ENCODE measurements at regions of chr2 and their contacts with region 1.

Region 1: DNA sequence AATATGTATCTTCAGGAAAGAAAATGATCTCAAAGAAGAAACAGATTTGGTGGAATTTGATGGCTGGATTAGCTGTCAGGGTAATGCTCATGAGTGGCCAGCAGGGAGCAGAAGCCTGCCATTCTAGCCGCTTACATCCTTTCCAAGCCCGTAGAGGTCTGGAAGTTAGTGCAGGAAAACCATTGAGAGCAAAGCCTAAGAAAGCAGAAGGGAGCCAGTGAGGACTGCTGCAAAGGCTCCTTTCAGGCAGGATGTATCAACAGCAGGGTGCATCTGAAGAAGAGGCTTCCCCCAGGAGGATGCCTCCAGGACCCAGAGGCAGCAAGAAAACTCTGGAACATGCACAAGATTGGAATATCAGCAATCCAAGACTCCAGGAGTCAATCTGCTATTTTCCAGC is 22.9 kb upstream of the LBH start:
- DNase-seq: no peak

Region 2: DNA sequence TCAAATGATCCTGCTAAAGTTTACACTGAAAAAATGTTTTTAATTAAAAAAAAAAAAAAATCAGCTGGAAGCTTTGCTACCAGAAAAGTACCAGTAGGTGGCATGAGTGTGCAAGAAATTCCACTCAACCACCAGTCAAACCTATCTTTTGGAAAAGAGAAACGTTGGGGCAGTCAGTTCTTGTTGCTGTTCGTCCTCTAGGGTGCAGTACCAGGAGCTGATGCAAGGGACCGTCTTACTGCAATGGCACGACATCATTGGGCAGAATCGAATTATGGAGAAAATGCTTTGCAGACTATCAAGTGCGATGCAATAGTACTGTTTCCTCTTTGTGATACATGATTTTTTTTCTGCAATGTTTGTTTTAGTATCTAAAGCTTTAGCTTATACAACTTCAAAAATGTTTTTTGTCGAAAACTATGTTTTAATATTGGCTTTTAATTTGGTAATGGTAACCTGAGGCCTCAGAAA is 43.4 kb before region 1 on chr2:
- intact Hi-C with region 1: loop called (anchors 5 kb)
- DNase-seq: no peak

Region 3: GRCh38 chr2:30300456-30301221 is 92.2 kb after region 1 on chr2:
- intact Hi-C with region 1: loop called (anchors 5 kb)
- DNase-seq: peak; percentile 74

Region 4: GRCh38 chr2:30346471-30347169 is 138.2 kb after region 1 on chr2:
- intact Hi-C with region 1: loop called (anchors 5 kb)
- DNase-seq: peak; percentile 93

Region 5: DNA sequence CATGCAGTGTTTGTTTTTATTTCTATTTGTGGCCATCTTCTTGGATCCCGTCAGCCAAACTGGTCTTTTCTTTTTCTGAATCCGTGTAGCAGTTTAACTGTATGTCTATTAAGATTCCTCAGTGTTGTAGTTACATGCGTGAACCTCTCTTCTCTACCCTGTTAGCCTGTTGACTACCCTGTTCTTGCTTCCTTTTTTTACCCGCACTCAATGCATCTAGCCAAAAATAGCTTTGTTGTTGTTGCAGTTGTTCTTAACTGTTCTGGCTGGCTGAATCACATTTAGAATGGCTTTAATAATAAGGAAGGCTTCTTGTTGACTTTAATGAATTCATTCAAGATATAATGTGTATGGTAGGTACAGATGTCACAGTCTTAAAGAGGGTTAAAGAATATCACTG is 375.7 kb after region 1 on chr2:
- intact Hi-C with region 1: loop called (anchors 5 kb)
- DNase-seq: no peak

Region 6: DNA sequence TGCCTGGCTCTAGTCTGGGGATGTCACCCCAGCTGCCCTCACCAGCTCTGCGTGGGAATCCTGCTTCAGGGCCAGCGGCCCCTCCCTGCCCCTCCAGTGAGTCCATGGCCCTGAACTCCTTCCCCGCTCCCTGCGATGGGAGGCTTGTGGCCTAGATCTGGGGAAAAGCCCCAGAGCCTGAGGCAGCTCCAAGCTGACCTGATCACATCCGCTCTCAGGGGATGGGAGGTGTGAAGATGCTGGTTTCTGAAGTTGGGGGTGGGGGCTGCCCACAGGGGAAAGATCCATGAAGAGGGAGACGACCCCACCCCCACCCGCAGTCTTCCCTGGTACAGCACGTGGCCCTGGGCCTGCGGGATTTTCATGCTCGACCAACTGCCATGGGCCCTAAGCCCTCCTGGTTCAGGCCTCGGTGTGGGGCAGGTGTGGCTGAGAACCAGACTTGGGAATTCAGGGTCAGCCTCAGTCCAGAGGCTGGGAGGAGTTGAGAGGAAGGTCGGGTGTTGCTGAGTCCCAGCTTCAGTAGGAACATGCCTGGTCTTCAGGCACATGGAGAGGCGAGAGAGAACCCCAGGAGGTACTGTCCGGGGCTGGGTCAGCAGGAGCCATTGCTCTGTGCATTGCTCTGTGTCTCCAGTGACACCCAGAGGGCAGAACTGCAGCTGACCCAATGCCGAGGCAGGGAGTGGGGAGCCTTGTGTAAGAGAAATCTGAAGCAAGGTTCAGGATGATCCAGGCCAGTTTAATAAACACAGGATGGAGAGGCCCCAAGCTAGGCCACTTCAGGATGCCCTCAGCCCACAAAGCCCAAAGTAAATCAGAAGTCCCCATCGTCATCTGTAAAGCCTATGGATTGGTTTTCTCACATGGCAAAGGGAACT is 483.7 kb after region 1 on chr2:
- intact Hi-C with region 1: loop called (anchors 5 kb)
- DNase-seq: no peak

Region 7: GRCh38 chr2:31170071-31170698 is 961.7 kb after region 1 on chr2:
- intact Hi-C with region 1: loop called (anchors 10 kb)
- DNase-seq: peak; percentile 82

Measured in cardiac septum (tissue), 1 donor.